Activated naive CD4-positive, alpha-beta T cell treated with anti-CD3 and anti-CD28 coated beads for 36 hours (primary cell): ENCODE measurements at regions of chr19 and their contacts with region 1.

Region 1: GRCh38 chr19:38964738-38965137 is 10.8 kb downstream of the FBXO17 start:
- DNase-seq: no peak
- H3K4me3 Mint-ChIP-seq: no peak overlapping the region
- H3K27ac Mint-ChIP-seq: no peak overlapping the region
- H3K4me1 Mint-ChIP-seq: no peaks in the 10 kb centered on the region
- H3K27me3 Mint-ChIP-seq: peaks cover 2% of the 10 kb centered on the region

Region 2: GRCh38 chr19:38977445-38978325 is 12.9 kb after region 1 on chr19:
- CTCF ChIA-PET with region 1: interaction called, 5 read pairs
- intact Hi-C with region 1: loop called (anchors 1 kb)
- DNase-seq: peak; percentile 76
- H3K4me3 Mint-ChIP-seq: no peak overlapping the region
- H3K27ac Mint-ChIP-seq: no peak overlapping the region
- H3K4me1 Mint-ChIP-seq: peaks cover 20% of the 10 kb centered on the region
- H3K27me3 Mint-ChIP-seq: peaks cover 23% of the 10 kb centered on the region

Region 3: DNA sequence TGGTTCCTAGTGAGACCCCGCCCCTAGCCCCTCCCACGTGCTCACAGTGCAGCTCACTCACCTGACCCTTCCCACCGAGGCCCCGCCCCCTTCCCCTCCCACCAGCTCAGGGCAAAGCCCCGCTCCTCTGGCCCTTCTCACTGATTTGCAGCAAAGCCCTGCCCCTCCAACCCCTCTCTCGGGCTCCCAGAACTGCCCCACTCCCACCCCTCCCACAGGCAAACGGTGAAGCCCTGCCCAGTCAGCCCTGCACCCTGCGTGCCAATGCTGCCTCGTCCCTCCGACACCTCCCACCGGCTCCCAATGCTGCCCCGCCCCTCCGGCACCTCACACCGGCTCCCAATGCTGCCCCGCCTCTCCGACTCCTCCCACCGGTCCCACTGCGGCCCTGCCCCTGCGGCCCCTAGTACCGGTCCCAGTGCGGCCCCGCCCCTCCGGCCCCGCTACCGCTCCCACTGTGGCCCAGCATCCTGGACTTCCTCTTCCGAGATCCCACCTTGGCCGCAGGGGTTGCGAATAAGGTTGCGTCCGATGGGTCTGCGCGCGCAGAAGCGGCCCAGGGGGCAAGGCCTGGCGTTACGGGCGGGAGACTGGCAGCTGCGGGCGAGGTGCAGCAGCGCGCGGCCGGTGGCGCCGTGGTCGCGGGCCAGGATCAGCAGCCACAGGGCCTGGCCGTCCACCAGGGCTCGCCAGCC is 66.8 kb after region 1 on chr19:
- CTCF ChIA-PET with region 1: interaction called, 6 read pairs
- intact Hi-C with region 1: loop called (anchors 2 kb)
- DNase-seq: peak; percentile 92
- H3K4me3 Mint-ChIP-seq: peak overlapping the region; percentile 69
- H3K27ac Mint-ChIP-seq: no peak overlapping the region
- H3K4me1 Mint-ChIP-seq: peaks cover 16% of the 10 kb centered on the region
- H3K27me3 Mint-ChIP-seq: peaks cover 17% of the 10 kb centered on the region

Region 4: DNA sequence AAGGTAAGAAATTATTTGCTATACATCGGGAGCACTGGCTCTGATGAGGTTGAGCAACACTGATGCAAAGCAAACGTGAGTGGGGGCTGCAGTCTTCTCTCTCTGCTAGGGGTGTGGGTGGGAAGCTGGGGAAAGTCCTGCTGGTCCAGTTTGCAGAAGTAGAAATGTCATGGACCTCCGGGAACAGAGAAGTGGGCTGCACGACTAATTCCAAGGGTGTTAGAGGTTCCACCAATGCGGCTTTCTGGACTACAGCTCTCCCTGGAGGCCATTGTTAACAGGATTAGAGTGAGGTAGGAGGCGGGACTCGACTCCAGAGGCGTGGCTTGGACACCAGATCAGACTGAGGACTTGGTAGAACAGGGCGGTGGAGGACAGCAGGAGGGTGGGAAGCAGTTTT is 73.4 kb after region 1 on chr19:
- CTCF ChIA-PET with region 1: interaction called, 6 read pairs
- intact Hi-C with region 1: loop called (anchors 2 kb)
- DNase-seq: peak; percentile 24
- H3K4me3 Mint-ChIP-seq: no peak overlapping the region
- H3K27ac Mint-ChIP-seq: peak overlapping the region; percentile 18
- H3K4me1 Mint-ChIP-seq: no peaks in the 10 kb centered on the region
- H3K27me3 Mint-ChIP-seq: peaks cover 7% of the 10 kb centered on the region

Region 5: GRCh38 chr19:39196860-39197822 is 232.4 kb after region 1 on chr19 and contains the start of gene NCCRP1:
- CTCF ChIA-PET with region 1: no interaction called
- intact Hi-C with region 1: loop called (anchors 2 kb)
- DNase-seq: peak; percentile 21
- H3K4me3 Mint-ChIP-seq: peak within 1 kb of the TSS; percentile 8
- H3K27ac Mint-ChIP-seq: no peak within 1 kb of the TSS
- H3K4me1 Mint-ChIP-seq: peaks cover 20% of the 10 kb centered on the region
- H3K27me3 Mint-ChIP-seq: peaks cover 66% of the 10 kb centered on the region
- total RNA-seq, gene NCCRP1: not detected